Left ventricle myocardium superior (tissue), 1 donor: ENCODE measurements at regions of chr5 and their contacts with region 1.

Region 1: DNA sequence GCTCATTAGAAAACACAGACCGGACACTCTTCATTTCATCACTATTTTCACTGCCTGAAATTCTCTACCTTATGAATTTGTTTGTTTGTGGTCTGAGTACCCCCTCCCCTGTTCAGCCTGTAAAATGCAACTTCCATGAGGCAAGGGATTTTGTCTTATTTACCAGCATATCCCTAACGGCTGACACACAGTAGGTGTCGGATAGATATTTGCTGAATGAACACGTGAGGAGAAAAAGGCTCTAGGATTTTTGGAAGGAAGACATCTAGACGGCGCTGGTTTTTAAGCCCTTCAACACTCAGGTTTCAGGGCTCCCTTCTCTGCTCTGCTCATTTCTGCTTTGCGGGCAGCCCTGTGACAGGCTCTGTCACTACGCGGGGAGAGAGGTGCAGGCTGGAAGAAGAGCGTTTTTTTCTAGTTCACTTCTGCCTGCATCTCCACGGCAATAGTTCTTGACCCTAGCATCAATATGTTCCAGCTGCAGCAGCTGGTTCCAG is 41.0 kb downstream of the KCNMB1 start:
- DNase-seq: no peak
- ATAC-seq: peak; percentile 50

Region 2: GRCh38 chr5:170225326-170226128 is 122.7 kb before region 1 on chr5:
- intact Hi-C with region 1: loop called (anchors 10 kb)
- DNase-seq: peak; percentile 72
- ATAC-seq: peak; percentile 84

Region 3: DNA sequence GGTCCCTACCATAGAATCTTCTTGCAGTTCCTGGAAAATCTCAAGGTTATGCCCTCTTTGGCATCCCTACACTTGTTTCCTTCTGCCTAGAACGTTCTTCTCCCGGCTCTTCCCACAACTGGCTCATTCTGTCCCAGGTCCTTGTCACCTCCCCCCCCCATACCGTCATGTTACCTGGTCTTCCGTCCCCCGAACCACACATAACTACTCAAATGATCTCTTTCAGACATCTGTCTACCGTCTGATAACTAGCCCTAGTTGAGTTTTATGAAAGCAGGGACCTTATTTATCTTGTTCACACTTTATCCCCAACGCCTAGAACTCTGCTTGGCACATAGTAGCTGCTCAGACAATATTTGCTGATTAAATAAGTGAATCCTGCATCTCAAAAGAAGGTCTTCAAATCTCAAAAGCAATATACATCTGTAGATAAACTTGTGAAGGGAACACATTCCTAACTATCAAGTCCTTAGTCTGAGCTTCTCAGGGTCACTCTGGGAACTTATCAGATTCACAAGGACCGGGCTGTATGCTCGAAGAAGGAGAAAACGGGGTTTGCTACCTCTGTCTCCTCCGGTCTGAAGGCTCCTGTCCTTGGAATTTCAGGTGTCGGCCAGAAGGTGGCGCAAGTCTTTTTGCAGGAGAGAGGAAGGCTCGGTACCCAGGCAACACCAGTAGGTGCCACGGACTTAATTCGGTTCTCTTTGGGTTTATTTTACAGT is 80.6 kb before region 1 on chr5:
- intact Hi-C with region 1: loop called (anchors 10 kb)
- DNase-seq: peak; percentile 78
- ATAC-seq: peak; percentile 83

Region 4: GRCh38 chr5:170638454-170639220 is 290.5 kb after region 1 on chr5:
- intact Hi-C with region 1: no loop called
- DNase-seq: peak; percentile 70
- ATAC-seq: peak; percentile 75